ENCODE measurements at regions of chr19 and their contacts with region 1.

Region 1: DNA sequence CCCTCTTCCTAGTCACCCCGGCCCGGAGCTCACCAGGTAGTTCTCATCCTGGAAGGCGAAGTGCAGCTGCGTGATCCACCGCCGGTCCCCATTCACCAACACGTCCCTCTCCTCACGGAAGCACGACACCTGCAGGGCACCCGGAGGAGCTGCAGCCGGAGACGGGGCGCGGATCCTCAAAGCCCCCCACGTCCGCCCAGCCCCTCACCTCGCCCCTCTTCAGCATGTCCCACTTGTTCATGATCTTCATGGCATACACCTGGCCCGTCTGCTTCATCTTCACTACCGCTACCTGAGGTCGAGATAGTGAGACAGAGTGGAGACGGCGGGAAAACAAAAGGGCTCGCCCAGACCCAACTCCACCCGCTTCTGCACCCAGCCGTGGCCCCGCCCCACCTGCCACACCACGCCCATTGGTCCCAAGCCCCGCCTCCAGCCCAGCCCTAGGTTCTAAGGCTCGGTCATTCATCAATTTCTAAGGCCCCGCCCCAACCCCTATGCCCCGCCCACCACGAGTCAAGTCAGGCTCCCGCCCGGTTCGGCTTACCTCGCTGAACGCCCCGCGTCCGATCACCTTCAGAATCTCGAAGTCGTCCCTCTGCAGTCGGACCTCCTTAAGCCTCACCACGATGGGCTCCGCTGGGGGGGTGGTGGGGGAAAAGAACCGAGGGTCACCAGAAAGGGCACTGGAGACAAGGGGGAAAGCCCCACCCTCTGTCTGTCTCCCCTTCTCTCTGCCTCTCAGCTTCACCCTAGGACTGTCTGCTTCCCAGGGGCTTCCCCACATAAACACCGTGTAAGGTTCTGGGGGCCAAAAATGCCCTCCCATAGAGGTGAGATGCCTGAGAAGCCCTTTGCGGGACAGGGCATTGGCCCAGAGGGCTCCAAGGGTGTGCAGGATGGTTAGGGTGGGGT is 2.8 kb downstream of the DMPK start:
- DNase-seq: peak; percentile 95
- H3K4me3 ChIP-seq: peak overlapping the region; percentile 36
- H3K4me3 Mint-ChIP-seq: peak overlapping the region; percentile 73
- H3K27ac Mint-ChIP-seq: peak overlapping the region; percentile 9
- H3K4me1 ChIP-seq: peaks cover 15% of the 10 kb centered on the region
- H3K4me1 Mint-ChIP-seq: peaks cover 18% of the 10 kb centered on the region
- H3K27me3 ChIP-seq: no peaks in the 10 kb centered on the region
- H3K27me3 Mint-ChIP-seq: no peaks in the 10 kb centered on the region
- CTCF ChIP-seq: peak; percentile 85 to 86

Region 2: DNA sequence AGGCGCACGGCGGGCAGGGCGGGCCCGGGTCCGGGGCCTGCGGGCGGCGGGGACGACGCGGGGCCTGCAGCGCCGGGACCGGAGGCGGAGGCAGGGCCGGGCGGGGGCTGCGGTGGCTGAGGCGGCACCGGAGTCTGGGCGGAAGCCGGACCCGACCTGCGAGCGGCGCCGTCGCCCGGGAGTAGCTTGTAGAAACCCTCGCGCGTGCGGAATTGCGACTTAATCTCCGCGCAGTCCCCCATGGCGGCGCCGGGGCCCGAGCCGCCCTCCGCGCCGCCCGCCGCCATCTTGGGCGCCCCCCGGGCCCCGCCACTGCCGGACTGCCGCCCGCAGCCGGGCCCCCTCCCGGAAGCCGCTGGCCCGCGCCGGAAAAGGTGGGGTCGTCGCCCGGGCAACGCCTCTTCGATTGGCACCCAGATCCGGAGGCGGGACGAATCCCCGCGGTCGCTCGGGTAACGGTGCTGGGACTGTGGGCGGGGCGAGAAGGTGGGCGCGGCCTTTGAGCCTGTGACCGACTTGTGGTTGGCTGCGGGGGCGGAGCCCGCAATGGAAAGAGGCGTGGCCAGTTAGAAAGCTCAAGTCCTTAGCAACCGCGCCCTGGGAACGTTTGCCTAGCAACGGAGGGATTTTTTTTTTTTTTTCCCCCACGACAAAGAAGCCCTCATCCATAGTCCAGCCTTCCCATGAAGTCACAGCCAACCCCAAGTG is 13.1 kb after region 1 on chr19 and contains the start of gene DMWD:
- CTCF ChIA-PET with region 1: interaction called, 11 read pairs
- POLR2A ChIA-PET with region 1: interaction called, 7 read pairs
- intact Hi-C with region 1: no loop called
- DNase-seq: peak; percentile 100
- H3K4me3 ChIP-seq: peak within 1 kb of the TSS; percentile 76
- H3K4me3 Mint-ChIP-seq: peak within 1 kb of the TSS; percentile 92
- H3K27ac Mint-ChIP-seq: peak within 1 kb of the TSS; percentile 79
- H3K4me1 ChIP-seq: peaks cover 3% of the 10 kb centered on the region; the same call in 1 of the 2 replicates
- H3K4me1 Mint-ChIP-seq: peaks cover 23% of the 10 kb centered on the region
- H3K27me3 ChIP-seq: no peaks in the 10 kb centered on the region
- H3K27me3 Mint-ChIP-seq: no peaks in the 10 kb centered on the region
- CTCF ChIP-seq: no peak
- total RNA-seq, gene DMWD: 72.4 and 76.3 TPM in 2 replicates

Region 3: DNA sequence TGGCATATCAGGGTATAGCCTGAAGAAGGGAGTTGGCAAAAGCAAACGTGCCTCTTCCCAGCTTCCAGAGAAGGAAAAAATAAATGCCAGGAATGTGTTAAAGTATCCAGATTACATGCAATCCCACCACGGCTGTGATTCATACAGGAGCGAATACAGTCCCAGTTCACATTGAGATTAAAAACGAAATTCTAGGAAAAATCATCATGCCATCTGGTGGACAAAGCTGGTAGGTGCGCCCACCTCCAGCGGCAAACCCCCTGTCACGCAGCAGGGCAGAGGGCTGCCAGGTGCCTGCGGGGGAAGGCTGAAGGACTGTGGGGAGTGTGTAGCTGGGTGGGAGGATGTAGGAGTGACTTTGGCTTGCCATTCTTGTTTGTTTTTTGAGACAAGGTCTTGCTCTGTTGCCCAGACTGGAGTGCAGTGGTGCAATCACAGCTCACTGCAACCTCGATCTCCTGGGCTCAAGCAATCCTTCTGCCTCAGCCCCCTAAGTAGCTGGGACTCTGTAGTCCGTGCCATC is 19.6 kb after region 1 on chr19:
- CTCF ChIA-PET with region 1: interaction called, 14 read pairs
- POLR2A ChIA-PET with region 1: interaction called, 14 read pairs
- intact Hi-C with region 1: no loop called
- DNase-seq: peak in 1 of 2 experiments; percentile 79
- H3K4me3 ChIP-seq: no peak overlapping the region
- H3K4me3 Mint-ChIP-seq: peak overlapping the region; percentile 4
- H3K27ac Mint-ChIP-seq: no peak overlapping the region
- H3K4me1 ChIP-seq: no peaks in the 10 kb centered on the region
- H3K4me1 Mint-ChIP-seq: peaks cover 6% of the 10 kb centered on the region
- H3K27me3 ChIP-seq: no peaks in the 10 kb centered on the region
- H3K27me3 Mint-ChIP-seq: no peaks in the 10 kb centered on the region
- CTCF ChIP-seq: peak; percentile 76 to 85

Region 4: GRCh38 chr19:45847663-45848062 is 68.2 kb after region 1 on chr19:
- CTCF ChIA-PET with region 1: no interaction called
- POLR2A ChIA-PET with region 1: no interaction called
- intact Hi-C with region 1: no loop called
- DNase-seq: no peak
- H3K4me3 ChIP-seq: no peak overlapping the region
- H3K4me3 Mint-ChIP-seq: no peak overlapping the region
- H3K27ac Mint-ChIP-seq: no peak overlapping the region
- H3K4me1 ChIP-seq: no peaks in the 10 kb centered on the region
- H3K4me1 Mint-ChIP-seq: no peaks in the 10 kb centered on the region
- H3K27me3 ChIP-seq: no peaks in the 10 kb centered on the region
- H3K27me3 Mint-ChIP-seq: no peaks in the 10 kb centered on the region
- CTCF ChIP-seq: no peak

Region 5: DNA sequence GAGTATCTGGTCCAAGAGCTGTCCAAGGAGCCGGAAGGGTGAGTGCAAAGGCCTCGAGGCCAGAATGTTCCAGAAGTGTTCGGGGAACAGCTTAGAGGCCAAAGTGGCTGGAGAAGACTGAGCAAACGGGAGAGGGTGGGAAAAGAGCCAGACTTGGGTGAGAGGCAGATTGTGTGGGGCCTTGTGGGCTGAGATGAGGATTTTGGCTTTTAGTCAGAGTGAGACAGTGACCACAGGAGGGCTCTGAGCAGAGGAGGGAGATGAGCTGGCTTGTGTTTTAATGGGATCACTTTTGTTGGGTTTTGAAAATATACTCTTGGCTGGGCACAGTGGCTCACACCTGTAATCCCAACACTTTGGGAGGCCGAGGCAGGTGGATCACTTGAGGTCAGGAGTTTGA is 129.5 kb after region 1 on chr19:
- CTCF ChIA-PET with region 1: no interaction called
- POLR2A ChIA-PET with region 1: no interaction called
- intact Hi-C with region 1: no loop called
- DNase-seq: no peak
- H3K4me3 ChIP-seq: no peak overlapping the region
- H3K4me3 Mint-ChIP-seq: no peak overlapping the region
- H3K27ac Mint-ChIP-seq: no peak overlapping the region
- H3K4me1 ChIP-seq: peaks cover 14% of the 10 kb centered on the region
- H3K4me1 Mint-ChIP-seq: peaks cover 11% of the 10 kb centered on the region
- H3K27me3 ChIP-seq: no peaks in the 10 kb centered on the region
- H3K27me3 Mint-ChIP-seq: no peaks in the 10 kb centered on the region
- CTCF ChIP-seq: no peak

Measured in Caco-2 (cell line).